Cardiac septum (tissue), 1 donor: ENCODE measurements at regions of chr6 and their contacts with region 1.

Region 1: GRCh38 chr6:118464620-118465019 is 83.5 kb upstream of the PLN start:
- DNase-seq: no peak

Region 2: GRCh38 chr6:118377711-118378414 is 86.8 kb before region 1 on chr6:
- intact Hi-C with region 1: loop called (anchors 5 kb)
- DNase-seq: no peak

Region 3: GRCh38 chr6:118934461-118935330 is 470.1 kb after region 1 on chr6 and contains the start of gene MCM9:
- intact Hi-C with region 1: no loop called
- DNase-seq: peak; percentile 96
- total RNA-seq, gene MCM9: 6.8 TPM